ENCODE measurements at regions of chr10 and their contacts with region 1.

Region 1: GRCh38 chr10:73772280-73773151 is 9.3 kb upstream of the CHCHD1 start:
- DNase-seq: peak; percentile 84 to 85
- H3K4me3 ChIP-seq: peak overlapping the region; percentile 91
- H3K4me3 Mint-ChIP-seq: peak overlapping the region; percentile 82
- H3K27ac Mint-ChIP-seq: peak overlapping the region; percentile 75
- H3K4me1 ChIP-seq: peaks cover 7% of the 10 kb centered on the region; the same call in 1 of the 2 replicates
- H3K4me1 Mint-ChIP-seq: peaks cover 21% of the 10 kb centered on the region
- H3K27me3 ChIP-seq: no peaks in the 10 kb centered on the region
- H3K27me3 Mint-ChIP-seq: no peaks in the 10 kb centered on the region
- CTCF ChIP-seq: peak in 1 of 2 experiments; percentile 2

Region 2: DNA sequence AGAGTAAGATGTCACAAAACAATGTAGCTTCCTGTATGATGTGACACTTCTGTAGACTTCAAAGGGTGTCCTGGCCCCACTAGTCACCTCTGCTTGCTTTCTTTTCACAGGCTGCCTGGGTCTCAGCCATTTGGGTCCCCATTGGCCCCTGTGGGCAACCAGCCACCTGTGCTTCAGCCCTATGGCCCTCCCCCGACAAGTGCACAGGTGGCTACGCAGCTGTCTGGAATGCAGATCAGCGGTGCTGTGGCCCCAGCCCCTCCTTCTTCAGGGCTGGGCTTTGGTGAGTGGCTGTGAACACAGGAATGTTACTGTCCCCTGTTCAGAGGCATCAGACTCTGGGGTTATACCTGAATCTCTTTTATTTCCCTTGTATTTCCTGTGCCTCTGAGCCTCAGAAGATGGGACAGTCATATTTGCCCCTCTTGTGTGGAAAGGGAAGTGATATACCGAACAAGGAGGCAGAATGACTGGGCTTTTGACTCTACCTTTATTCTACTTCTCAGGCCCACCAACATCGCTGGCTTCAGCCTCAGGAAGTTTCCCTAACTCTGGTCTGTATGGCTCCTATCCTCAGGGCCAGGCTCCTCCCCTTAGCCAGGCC is 12.9 kb before region 1 on chr10:
- CTCF ChIA-PET with region 1: no interaction called
- POLR2A ChIA-PET with region 1: interaction called, 13 read pairs
- intact Hi-C with region 1: loop called (anchors 1 kb)
- DNase-seq: peak; percentile 85
- H3K4me3 ChIP-seq: no peak overlapping the region
- H3K4me3 Mint-ChIP-seq: peak overlapping the region; percentile 45
- H3K27ac Mint-ChIP-seq: peak overlapping the region; percentile 67
- H3K4me1 ChIP-seq: peaks cover 19% of the 10 kb centered on the region
- H3K4me1 Mint-ChIP-seq: peaks cover 34% of the 10 kb centered on the region
- H3K27me3 ChIP-seq: no peaks in the 10 kb centered on the region
- H3K27me3 Mint-ChIP-seq: no peaks in the 10 kb centered on the region
- CTCF ChIP-seq: no peak

Region 3: GRCh38 chr10:73888963-73889407 is 116.5 kb after region 1 on chr10:
- CTCF ChIA-PET with region 1: no interaction called
- POLR2A ChIA-PET with region 1: no interaction called
- intact Hi-C with region 1: no loop called
- DNase-seq: peak in 1 of 2 experiments; percentile 51
- H3K4me3 ChIP-seq: no peak overlapping the region
- H3K4me3 Mint-ChIP-seq: no peak overlapping the region
- H3K27ac Mint-ChIP-seq: no peak overlapping the region
- H3K4me1 ChIP-seq: peaks cover 29% of the 10 kb centered on the region
- H3K4me1 Mint-ChIP-seq: peaks cover 16% of the 10 kb centered on the region
- H3K27me3 ChIP-seq: no peaks in the 10 kb centered on the region
- H3K27me3 Mint-ChIP-seq: no peaks in the 10 kb centered on the region
- CTCF ChIP-seq: no peak